H1 (cell line): ENCODE measurements at regions of chr3 and their contacts with region 1.

Region 1: DNA sequence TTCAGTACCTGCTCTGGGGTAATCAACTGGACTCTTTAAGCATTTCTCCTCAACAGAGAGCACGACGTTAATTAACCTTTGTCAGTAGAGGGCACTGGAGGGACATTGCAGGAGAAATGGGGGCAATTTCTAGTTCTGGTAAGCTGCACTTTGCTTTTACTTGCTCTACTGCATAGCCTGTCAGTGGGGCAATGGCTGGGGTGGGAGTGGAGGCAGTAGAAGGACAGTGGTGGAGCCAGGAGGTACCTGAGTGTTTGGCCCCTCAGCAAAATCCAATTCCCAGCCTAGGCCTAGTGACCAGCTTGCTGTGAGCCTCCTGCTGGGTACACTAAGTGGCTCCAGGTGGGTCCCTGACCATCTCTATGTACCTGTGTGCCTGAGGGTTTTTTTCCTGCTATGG is 18.3 kb upstream of the MED12L start:
- DNase-seq: peak in 1 of 2 experiments; percentile 53
- H3K4me3 ChIP-seq: no peak overlapping the region
- H3K27ac ChIP-seq: no peak overlapping the region
- H3K4me1 ChIP-seq: no peaks in the 10 kb centered on the region
- H3K27me3 ChIP-seq: peaks cover 0 to 1% (median 0%) of the 10 kb centered on the region in 4 experiments; a peak in 1 of 7 replicates
- CTCF ChIP-seq: peak in 2 of 3 experiments; percentile 68 to 77; a peak in 3 of 4 replicates
- EP300 ChIP-seq: no peak
- POLR2A ChIP-seq: no peak
- RAD21 ChIP-seq: peak; percentile 77 to 83

Region 2: DNA sequence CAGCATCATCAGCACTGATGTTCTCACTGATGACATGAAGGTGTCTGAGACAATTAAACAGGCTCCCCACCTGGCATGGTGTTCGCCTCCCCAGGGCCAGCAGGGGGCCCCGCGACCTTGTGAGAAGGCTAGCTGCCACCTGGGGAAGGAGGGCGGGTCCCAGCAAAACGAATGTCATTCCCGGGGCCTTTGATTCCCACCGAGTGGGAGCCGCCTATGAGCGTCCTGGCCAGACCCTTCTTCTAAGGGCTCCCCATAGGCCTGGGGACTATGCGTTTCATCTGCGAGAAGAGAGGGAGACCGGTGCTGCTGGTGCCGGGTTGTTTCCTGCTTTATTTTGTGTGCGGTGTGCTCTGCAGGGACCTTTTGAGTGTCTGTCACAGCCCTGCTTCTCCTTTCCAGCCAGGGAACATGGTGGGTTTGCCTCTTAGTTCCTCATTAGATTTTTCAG is 141.4 kb before region 1 on chr3:
- CTCF ChIA-PET with region 1: interaction called, 12 read pairs
- POLR2A ChIA-PET with region 1: no interaction called
- DNase-seq: peak; percentile 61 to 80
- H3K4me3 ChIP-seq: no peak overlapping the region; a peak in 1 of 8 replicates
- H3K27ac ChIP-seq: no peak overlapping the region
- H3K4me1 ChIP-seq: peaks cover 2 to 4% (median 3%) of the 10 kb centered on the region in 4 experiments; a peak in 4 of 7 replicates
- H3K27me3 ChIP-seq: no peaks in the 10 kb centered on the region
- CTCF ChIP-seq: peak; percentile 70 to 80 (median 76)
- EP300 ChIP-seq: no peak
- POLR2A ChIP-seq: no peak
- RAD21 ChIP-seq: peak; percentile 77 to 81

Region 3: GRCh38 chr3:151008699-151009098 is 58.5 kb before region 1 on chr3:
- CTCF ChIA-PET with region 1: interaction called, 11 read pairs
- POLR2A ChIA-PET with region 1: no interaction called
- DNase-seq: no peak
- H3K4me3 ChIP-seq: no peak overlapping the region
- H3K27ac ChIP-seq: no peak overlapping the region
- H3K4me1 ChIP-seq: peaks cover 0 to 2% (median 0%) of the 10 kb centered on the region in 4 experiments; a peak in 1 of 7 replicates
- H3K27me3 ChIP-seq: no peaks in the 10 kb centered on the region
- CTCF ChIP-seq: peak in 1 of 3 experiments; percentile 32; a peak in 2 of 4 replicates
- EP300 ChIP-seq: no peak
- POLR2A ChIP-seq: no peak
- RAD21 ChIP-seq: peak; percentile 68 to 76

Region 4: DNA sequence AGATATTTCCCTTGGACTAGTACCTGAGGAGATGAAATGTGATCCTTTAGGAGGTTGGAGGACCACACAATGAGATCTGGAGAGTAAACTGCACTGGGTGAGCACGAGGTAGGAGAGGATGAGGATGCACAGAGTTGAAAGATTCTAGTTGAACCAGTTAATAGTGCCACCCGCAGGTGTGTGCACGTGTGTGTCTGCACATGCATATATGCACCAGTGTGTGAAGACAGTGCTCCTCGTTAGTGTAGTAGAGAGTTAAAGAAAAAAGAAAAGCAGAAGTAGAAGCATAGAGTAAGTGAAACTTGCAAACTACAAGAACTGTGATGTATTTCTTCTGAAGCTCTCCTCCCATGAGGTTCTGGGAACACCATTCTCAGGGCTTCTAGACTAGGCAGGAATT is 26.7 kb after region 1 on chr3:
- CTCF ChIA-PET with region 1: interaction called, 29 read pairs
- POLR2A ChIA-PET with region 1: no interaction called
- DNase-seq: no peak
- H3K4me3 ChIP-seq: no peak overlapping the region
- H3K27ac ChIP-seq: no peak overlapping the region
- H3K4me1 ChIP-seq: peaks cover 0 to 11% (median 5%) of the 10 kb centered on the region in 4 experiments; a peak in 4 of 7 replicates
- H3K27me3 ChIP-seq: no peaks in the 10 kb centered on the region
- CTCF ChIP-seq: peak in 1 of 3 experiments; percentile 5; a peak in 1 of 4 replicates
- EP300 ChIP-seq: no peak
- POLR2A ChIP-seq: no peak
- RAD21 ChIP-seq: no peak

Region 5: GRCh38 chr3:151156618-151157216 is 89.6 kb after region 1 on chr3:
- CTCF ChIA-PET with region 1: interaction called, 32 read pairs
- POLR2A ChIA-PET with region 1: no interaction called
- DNase-seq: no peak
- H3K4me3 ChIP-seq: no peak overlapping the region
- H3K27ac ChIP-seq: no peak overlapping the region
- H3K4me1 ChIP-seq: peaks cover 0 to 5% (median 3%) of the 10 kb centered on the region in 4 experiments; a peak in 4 of 7 replicates
- H3K27me3 ChIP-seq: no peaks in the 10 kb centered on the region
- CTCF ChIP-seq: peak in 2 of 3 experiments; percentile 40 to 66; a peak in 2 of 4 replicates
- EP300 ChIP-seq: no peak
- POLR2A ChIP-seq: no peak
- RAD21 ChIP-seq: peak; percentile 22 to 31

Region 6: GRCh38 chr3:151265866-151266265 is 198.7 kb after region 1 on chr3:
- CTCF ChIA-PET with region 1: no interaction called
- POLR2A ChIA-PET with region 1: no interaction called
- DNase-seq: peak in 1 of 2 experiments; percentile 17
- H3K4me3 ChIP-seq: no peak overlapping the region
- H3K27ac ChIP-seq: peak overlapping the region; percentile 61; the same call in 1 of the 2 replicates
- H3K4me1 ChIP-seq: peaks cover 0 to 7% (median 3%) of the 10 kb centered on the region in 4 experiments; a peak in 2 of 7 replicates
- H3K27me3 ChIP-seq: no peaks in the 10 kb centered on the region
- CTCF ChIP-seq: no peak
- EP300 ChIP-seq: 0 out of 3 replicates have a peak, but pooled peaks of 1 of the 2 experiments have one; percentile 9
- POLR2A ChIP-seq: no peak
- RAD21 ChIP-seq: no peak